Activated B cell treated with CpG ODN at 0.5 μM for 24 hours (primary cell): ENCODE measurements at regions of chr2 and their contacts with region 1.

Region 1: DNA sequence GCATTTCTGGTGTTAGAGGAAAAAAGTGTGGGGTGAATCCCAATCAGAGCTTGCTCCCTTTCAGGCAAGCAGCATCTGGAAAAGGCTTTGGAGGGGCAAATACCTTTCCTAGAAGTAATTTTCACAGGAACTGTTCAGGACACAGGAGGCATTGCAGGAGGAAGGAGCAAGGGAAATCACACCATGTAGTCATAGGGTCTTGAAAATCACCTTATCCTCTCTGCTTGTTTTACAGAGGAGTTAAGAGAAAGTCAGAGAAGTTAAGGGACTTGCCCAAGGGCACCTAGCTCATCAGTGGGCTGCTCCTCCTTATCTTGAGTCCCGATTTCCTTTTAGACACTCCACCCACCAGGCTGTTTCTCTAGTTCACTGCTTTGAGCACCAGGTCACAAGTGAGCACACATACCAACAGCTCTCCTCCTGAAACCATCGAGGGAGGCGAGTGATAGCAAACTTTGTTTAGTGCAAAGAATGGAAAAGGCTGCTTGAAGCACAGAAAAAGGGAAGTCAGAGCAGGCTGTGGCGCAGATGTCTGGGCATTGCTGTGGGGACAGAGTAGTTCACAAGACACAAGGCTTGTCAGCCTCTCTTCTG is 89.2 kb upstream of the CXCR4 start:
- DNase-seq: peak; percentile 57
- ATAC-seq: peak; percentile 66
- H3K4me3 Mint-ChIP-seq: peak overlapping the region; percentile 71
- H3K27ac Mint-ChIP-seq: peak overlapping the region; percentile 97
- H3K4me1 Mint-ChIP-seq: peaks cover 78% of the 10 kb centered on the region
- H3K27me3 Mint-ChIP-seq: no peaks in the 10 kb centered on the region
- CTCF ChIP-seq: no peak

Region 2: GRCh38 chr2:135985018-135985825 is 221.9 kb before region 1 on chr2 and contains the start of gene DARS1:
- CTCF ChIA-PET with region 1: no interaction called
- POLR2A ChIA-PET with region 1: interaction called, 10 read pairs
- intact Hi-C with region 1: no loop called
- DNase-seq: peak; percentile 80
- ATAC-seq: peak; percentile 86
- H3K4me3 Mint-ChIP-seq: peak within 1 kb of the TSS; percentile 95
- H3K27ac Mint-ChIP-seq: peak within 1 kb of the TSS; percentile 97
- H3K4me1 Mint-ChIP-seq: peaks cover 50% of the 10 kb centered on the region
- H3K27me3 Mint-ChIP-seq: no peaks in the 10 kb centered on the region
- CTCF ChIP-seq: no peak
- total RNA-seq, gene DARS1: 96.3 and 103 TPM in 2 replicates

Region 3: DNA sequence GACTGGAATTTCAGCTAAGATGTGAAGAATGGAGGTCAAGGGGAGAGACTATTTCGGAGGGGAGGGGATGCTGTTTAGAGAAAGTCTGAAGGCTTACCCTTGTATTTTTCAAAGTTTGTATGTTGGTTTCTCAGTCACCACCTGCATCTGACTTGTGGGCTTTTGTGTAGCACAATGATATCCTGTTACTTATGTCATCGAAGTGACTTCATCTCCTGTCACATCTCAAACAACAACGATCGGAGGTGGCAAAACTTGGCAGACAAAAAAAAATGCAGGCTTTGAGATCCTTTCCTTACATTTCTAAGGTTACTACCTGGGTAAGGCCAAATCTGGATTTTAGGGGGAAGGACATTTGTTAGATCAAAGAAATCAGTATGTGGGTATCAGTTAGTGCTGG is 77.5 kb before region 1 on chr2:
- CTCF ChIA-PET with region 1: interaction called, 20 read pairs
- POLR2A ChIA-PET with region 1: interaction called, 248 read pairs
- intact Hi-C with region 1: loop called (anchors 1 kb)
- DNase-seq: no peak
- ATAC-seq: no peak
- H3K4me3 Mint-ChIP-seq: peak overlapping the region; percentile 73
- H3K27ac Mint-ChIP-seq: peak overlapping the region; percentile 99
- H3K4me1 Mint-ChIP-seq: peaks cover 99% of the 10 kb centered on the region
- H3K27me3 Mint-ChIP-seq: no peaks in the 10 kb centered on the region
- CTCF ChIP-seq: no peak

Region 4: GRCh38 chr2:136238286-136239078 is 31.4 kb after region 1 on chr2:
- CTCF ChIA-PET with region 1: interaction called, 19 read pairs
- POLR2A ChIA-PET with region 1: interaction called, 124 read pairs
- intact Hi-C with region 1: loop called (anchors 1 kb)
- DNase-seq: peak; percentile 38
- ATAC-seq: peak; percentile 77
- H3K4me3 Mint-ChIP-seq: peak overlapping the region; percentile 24
- H3K27ac Mint-ChIP-seq: peak overlapping the region; percentile 92
- H3K4me1 Mint-ChIP-seq: peaks cover 91% of the 10 kb centered on the region
- H3K27me3 Mint-ChIP-seq: no peaks in the 10 kb centered on the region
- CTCF ChIP-seq: no peak

Region 5: DNA sequence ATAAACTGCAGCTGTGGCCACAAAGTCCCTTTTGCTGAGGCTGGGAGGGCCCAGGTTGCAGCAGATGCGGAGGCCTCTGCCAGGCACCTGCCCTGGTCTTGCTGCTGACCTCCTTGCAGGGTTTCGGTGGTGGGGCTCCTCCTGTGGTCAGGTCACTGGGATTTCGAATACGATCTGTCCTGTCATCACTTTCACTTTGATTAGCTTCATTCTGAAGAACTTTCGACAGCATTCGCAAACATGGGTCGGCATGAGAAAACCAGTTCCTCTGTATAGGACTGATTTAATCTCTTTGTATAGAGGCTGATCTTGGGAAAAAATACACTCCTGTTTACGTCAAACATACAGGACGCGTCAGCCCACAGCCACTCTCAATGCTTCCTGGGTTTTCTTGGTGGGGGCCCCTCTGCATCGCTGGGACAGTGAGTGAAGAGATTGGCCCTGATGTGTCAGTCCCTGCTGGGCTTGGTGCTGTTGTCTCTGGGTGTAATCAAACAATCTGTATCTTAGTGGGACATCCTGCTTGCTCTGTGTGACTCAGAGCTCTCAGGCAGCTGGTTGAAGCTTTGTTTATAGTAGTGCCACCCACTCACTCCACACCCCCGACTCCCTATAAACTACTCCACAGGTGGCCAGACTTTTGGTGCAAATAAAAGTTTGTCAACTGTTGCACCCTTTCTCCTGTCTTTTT is 120.2 kb after region 1 on chr2:
- CTCF ChIA-PET with region 1: no interaction called
- POLR2A ChIA-PET with region 1: interaction called, 11 read pairs
- intact Hi-C with region 1: loop called (anchors 1 kb)
- DNase-seq: no peak
- ATAC-seq: peak; percentile 78
- H3K4me3 Mint-ChIP-seq: peak overlapping the region; percentile 60
- H3K27ac Mint-ChIP-seq: peak overlapping the region; percentile 85
- H3K4me1 Mint-ChIP-seq: peaks cover 56% of the 10 kb centered on the region
- H3K27me3 Mint-ChIP-seq: no peaks in the 10 kb centered on the region
- CTCF ChIP-seq: no peak

Region 6: GRCh38 chr2:136384531-136385303 is 177.6 kb after region 1 on chr2:
- CTCF ChIA-PET with region 1: interaction called, 7 read pairs
- POLR2A ChIA-PET with region 1: interaction called, 47 read pairs
- intact Hi-C with region 1: loop called (anchors 1 kb)
- DNase-seq: no peak
- ATAC-seq: peak; percentile 67
- H3K4me3 Mint-ChIP-seq: peak overlapping the region; percentile 33
- H3K27ac Mint-ChIP-seq: peak overlapping the region; percentile 94
- H3K4me1 Mint-ChIP-seq: peaks cover 50% of the 10 kb centered on the region
- H3K27me3 Mint-ChIP-seq: no peaks in the 10 kb centered on the region
- CTCF ChIP-seq: peak; percentile 38